ENCODE measurements at regions of chr19 and their contacts with region 1.

Region 1: GRCh38 chr19:19821366-19821951 is at the start of gene ZNF506:
- DNase-seq: peak; percentile 83 to 98 (median 97)
- ATAC-seq: peak; percentile 91
- H3K4me3 ChIP-seq: peak within 1 kb of the TSS; percentile 69
- H3K4me3 Mint-ChIP-seq: peak within 1 kb of the TSS; percentile 97 to 100 (median 99)
- H3K27ac ChIP-seq: peak within 1 kb of the TSS; percentile 98
- H3K27ac Mint-ChIP-seq: peak within 1 kb of the TSS; percentile 99 to 100 (median 100)
- H3K4me1 ChIP-seq: peaks cover 19 to 26% of the 10 kb centered on the region in 2 donors
- H3K4me1 Mint-ChIP-seq: peaks cover 9 to 52% (median 32%) of the 10 kb centered on the region in 7 donors
- H3K27me3 ChIP-seq: no peaks in the 10 kb centered on the region
- H3K27me3 Mint-ChIP-seq: no peaks in the 10 kb centered on the region
- total RNA-seq, gene ZNF506: 20.4 to 93.9 (median 55.7) TPM

Region 2: GRCh38 chr19:19515764-19516519 is 305.5 kb before region 1 on chr19 and contains the start of gene NDUFA13:
- CTCF ChIA-PET with region 1: no interaction called
- POLR2A ChIA-PET with region 1: no interaction called
- intact Hi-C with region 1: no loop called
- DNase-seq: peak; percentile 88 to 98 (median 92)
- ATAC-seq: peak; percentile 96
- H3K4me3 ChIP-seq: peak within 1 kb of the TSS; percentile 96
- H3K4me3 Mint-ChIP-seq: peak within 1 kb of the TSS; percentile 89 to 98 (median 95)
- H3K27ac ChIP-seq: peak within 1 kb of the TSS; percentile 83
- H3K27ac Mint-ChIP-seq: peak within 1 kb of the TSS; percentile 89 to 98 (median 96)
- H3K4me1 ChIP-seq: peaks cover 13 to 14% of the 10 kb centered on the region in 2 donors
- H3K4me1 Mint-ChIP-seq: peaks cover 16 to 42% (median 27%) of the 10 kb centered on the region in 7 donors
- H3K27me3 ChIP-seq: no peaks in the 10 kb centered on the region
- H3K27me3 Mint-ChIP-seq: no peaks in the 10 kb centered on the region
- total RNA-seq, gene NDUFA13: 172 to 362 (median 176) TPM

Region 3: DNA sequence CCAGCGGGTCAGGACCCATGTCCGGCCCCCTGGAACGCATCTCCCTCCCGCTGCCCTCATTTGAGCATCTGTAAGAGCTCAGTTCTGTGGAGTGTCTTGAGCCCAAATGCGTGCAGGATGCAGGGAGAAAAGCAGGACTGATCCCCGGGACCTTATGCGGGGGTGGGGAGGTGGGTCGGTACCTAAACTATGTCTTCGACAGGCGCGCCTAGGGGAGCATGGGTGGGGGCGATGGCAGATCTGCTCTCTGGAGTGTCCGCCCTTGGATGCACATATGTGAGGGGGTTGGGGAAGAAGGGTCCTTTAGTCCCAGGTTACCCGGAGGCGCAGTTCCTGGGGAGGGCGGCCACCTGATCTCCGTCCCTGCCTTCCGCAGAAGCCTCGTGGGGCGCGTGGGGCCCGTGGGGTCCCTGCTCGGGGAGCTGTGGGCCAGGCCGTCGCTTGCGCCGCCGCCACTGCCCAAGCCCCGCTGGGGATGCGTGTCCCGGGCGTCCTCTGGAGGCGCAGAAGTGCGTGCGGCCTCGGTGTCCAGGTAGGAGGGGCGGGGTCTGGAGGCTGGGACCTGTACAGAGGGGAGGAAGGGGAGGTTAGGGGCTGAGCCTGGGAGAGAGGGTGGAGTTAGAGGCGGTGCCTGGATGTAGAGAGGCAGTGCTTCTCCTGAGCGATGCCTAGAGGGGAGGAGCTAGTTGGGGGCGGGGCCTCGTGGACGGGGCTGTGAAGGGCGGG is 280.6 kb before region 1 on chr19:
- CTCF ChIA-PET with region 1: no interaction called
- POLR2A ChIA-PET with region 1: no interaction called
- intact Hi-C with region 1: loop called in 1 of 2 experiments (anchors 5 kb)
- DNase-seq: peak; percentile 49 to 79 (median 69)
- ATAC-seq: peak; percentile 86
- H3K4me3 ChIP-seq: peak overlapping the region; percentile 50
- H3K4me3 Mint-ChIP-seq: peak overlapping the region; percentile 58 to 85 (median 77)
- H3K27ac ChIP-seq: no peak overlapping the region
- H3K27ac Mint-ChIP-seq: peak overlapping the region in 3 of 9 donors; percentile 43 to 81 (median 66)
- H3K4me1 ChIP-seq: peaks cover 15 to 25% of the 10 kb centered on the region in 2 donors
- H3K4me1 Mint-ChIP-seq: peaks cover 8 to 36% (median 29%) of the 10 kb centered on the region in 7 donors
- H3K27me3 ChIP-seq: no peaks in the 10 kb centered on the region
- H3K27me3 Mint-ChIP-seq: peaks cover 0 to 31% (median 4%) of the 10 kb centered on the region in 5 donors

Region 4: GRCh38 chr19:19788015-19788414 is 33.4 kb before region 1 on chr19:
- CTCF ChIA-PET with region 1: interaction called, 3 read pairs
- POLR2A ChIA-PET with region 1: interaction called, 10 read pairs
- intact Hi-C with region 1: no loop called
- DNase-seq: no peak
- ATAC-seq: no peak
- H3K4me3 ChIP-seq: no peak overlapping the region
- H3K4me3 Mint-ChIP-seq: no peak overlapping the region
- H3K27ac ChIP-seq: no peak overlapping the region
- H3K27ac Mint-ChIP-seq: no peak overlapping the region
- H3K4me1 ChIP-seq: no peaks in the 10 kb centered on the region
- H3K4me1 Mint-ChIP-seq: peaks cover 0 to 25% (median 23%) of the 10 kb centered on the region in 7 donors
- H3K27me3 ChIP-seq: no peaks in the 10 kb centered on the region
- H3K27me3 Mint-ChIP-seq: no peaks in the 10 kb centered on the region

Region 5: DNA sequence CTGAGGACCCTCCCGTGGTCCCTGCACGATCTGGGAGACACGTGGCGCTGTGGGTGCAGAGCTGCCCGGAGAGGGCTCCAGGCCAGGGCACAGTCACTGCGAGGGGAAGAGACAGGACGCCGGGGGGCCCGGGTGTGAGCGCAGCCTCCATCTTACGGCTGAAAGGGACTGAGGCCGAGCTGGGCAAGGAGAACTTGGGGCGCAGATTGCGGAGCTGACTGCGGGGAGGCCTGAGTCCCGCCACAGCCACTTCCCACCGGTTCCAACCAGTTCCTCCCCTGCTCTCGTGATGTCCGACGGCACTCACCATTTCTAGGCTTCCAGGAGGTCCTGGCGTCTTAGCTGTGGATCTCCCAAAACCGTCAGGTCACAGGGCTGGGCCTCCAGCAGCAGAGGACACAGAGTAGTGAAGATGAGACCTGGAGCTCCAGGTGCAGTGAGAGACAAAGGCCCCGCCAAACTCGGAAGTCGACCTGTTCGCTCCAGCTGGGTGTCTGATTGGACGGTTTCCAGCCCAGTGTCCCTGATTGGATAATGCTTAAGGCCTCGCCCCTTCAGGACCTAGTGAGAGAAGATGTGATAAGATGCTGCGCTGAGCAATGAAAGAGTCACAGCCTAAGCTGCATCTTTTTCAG is 39.4 kb after region 1 on chr19:
- CTCF ChIA-PET with region 1: interaction called, 5 read pairs
- POLR2A ChIA-PET with region 1: interaction called, 130 read pairs
- intact Hi-C with region 1: loop called (anchors 1 kb)
- DNase-seq: peak in 8 of 9 donors; percentile 35 to 78 (median 62)
- ATAC-seq: peak; percentile 76
- H3K4me3 ChIP-seq: peak overlapping the region; percentile 41
- H3K4me3 Mint-ChIP-seq: peak overlapping the region; percentile 43 to 81 (median 68)
- H3K27ac ChIP-seq: peak overlapping the region; percentile 35
- H3K27ac Mint-ChIP-seq: peak overlapping the region in 7 of 9 donors; percentile 0 to 77 (median 52)
- H3K4me1 ChIP-seq: no peaks in the 10 kb centered on the region
- H3K4me1 Mint-ChIP-seq: peaks cover 5 to 15% (median 8%) of the 10 kb centered on the region in 7 donors
- H3K27me3 ChIP-seq: no peaks in the 10 kb centered on the region
- H3K27me3 Mint-ChIP-seq: no peaks in the 10 kb centered on the region

Region 6: DNA sequence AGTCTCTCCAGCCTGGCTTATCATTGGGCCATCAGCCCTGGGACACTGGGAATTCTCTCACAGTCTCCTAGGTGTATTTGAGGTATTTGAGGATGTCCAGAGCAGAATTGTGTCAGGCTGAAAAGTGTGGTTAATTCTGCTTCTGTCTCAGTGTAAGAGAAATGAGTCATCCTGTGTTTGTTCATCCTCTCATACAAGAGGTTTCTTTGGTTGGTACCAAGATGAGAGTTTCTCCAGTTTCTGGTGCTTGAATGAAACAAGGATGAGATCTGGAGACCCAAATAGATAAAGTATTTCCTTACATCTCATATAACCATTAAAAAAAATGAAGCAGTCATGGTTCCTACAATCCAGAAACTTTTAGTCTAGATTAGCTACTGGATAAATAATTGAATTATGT is 51.9 kb after region 1 on chr19:
- CTCF ChIA-PET with region 1: no interaction called
- POLR2A ChIA-PET with region 1: interaction called, 130 read pairs
- intact Hi-C with region 1: no loop called
- DNase-seq: no peak
- ATAC-seq: no peak
- H3K4me3 ChIP-seq: no peak overlapping the region
- H3K4me3 Mint-ChIP-seq: no peak overlapping the region
- H3K27ac ChIP-seq: no peak overlapping the region
- H3K27ac Mint-ChIP-seq: peak overlapping the region in 1 of 9 donors; percentile 9
- H3K4me1 ChIP-seq: peaks cover 1 to 2% of the 10 kb centered on the region in 2 donors
- H3K4me1 Mint-ChIP-seq: peaks cover 9 to 48% (median 39%) of the 10 kb centered on the region in 7 donors
- H3K27me3 ChIP-seq: no peaks in the 10 kb centered on the region
- H3K27me3 Mint-ChIP-seq: no peaks in the 10 kb centered on the region

Region 7: GRCh38 chr19:20039203-20039723 is 217.8 kb after region 1 on chr19 and contains the start of gene ZNF682:
- CTCF ChIA-PET with region 1: no interaction called
- POLR2A ChIA-PET with region 1: no interaction called
- intact Hi-C with region 1: loop called in 1 of 2 experiments (anchors 1 kb)
- DNase-seq: peak; percentile 83 to 96 (median 94)
- ATAC-seq: peak; percentile 100
- H3K4me3 ChIP-seq: peak within 1 kb of the TSS; percentile 90
- H3K4me3 Mint-ChIP-seq: peak within 1 kb of the TSS; percentile 92 to 99 (median 96)
- H3K27ac ChIP-seq: peak within 1 kb of the TSS; percentile 81
- H3K27ac Mint-ChIP-seq: peak within 1 kb of the TSS; percentile 86 to 98 (median 94)
- H3K4me1 ChIP-seq: no peaks in the 10 kb centered on the region
- H3K4me1 Mint-ChIP-seq: peaks cover 5 to 27% (median 25%) of the 10 kb centered on the region in 7 donors
- H3K27me3 ChIP-seq: no peaks in the 10 kb centered on the region
- H3K27me3 Mint-ChIP-seq: peaks cover 0 to 5% (median 0%) of the 10 kb centered on the region in 5 donors
- total RNA-seq, gene ZNF682: 5.3 to 13.0 (median 9.5) TPM

Region 8: GRCh38 chr19:20051841-20052768 is 230.6 kb after region 1 on chr19:
- CTCF ChIA-PET with region 1: no interaction called
- POLR2A ChIA-PET with region 1: no interaction called
- intact Hi-C with region 1: no loop called
- DNase-seq: peak; percentile 17 to 50 (median 44)
- ATAC-seq: peak; percentile 93
- H3K4me3 ChIP-seq: peak overlapping the region; percentile 98
- H3K4me3 Mint-ChIP-seq: peak overlapping the region; percentile 95 to 100 (median 98)
- H3K27ac ChIP-seq: peak overlapping the region; percentile 77
- H3K27ac Mint-ChIP-seq: peak overlapping the region; percentile 83 to 97 (median 94)
- H3K4me1 ChIP-seq: peaks cover 8% of the 10 kb centered on the region in 2 donors
- H3K4me1 Mint-ChIP-seq: peaks cover 0 to 17% (median 8%) of the 10 kb centered on the region in 7 donors
- H3K27me3 ChIP-seq: no peaks in the 10 kb centered on the region
- H3K27me3 Mint-ChIP-seq: peaks cover 0 to 4% (median 0%) of the 10 kb centered on the region in 5 donors